Panc1 (cell line): ENCODE measurements at regions of chr1 and their contacts with region 1.

Region 1: GRCh38 chr1:169595764-169596711 is 9.8 kb upstream of the F5 start:
- DNase-seq: no peak
- ATAC-seq: no peak
- H3K4me3 ChIP-seq: no peak overlapping the region
- H3K27ac ChIP-seq: no peak overlapping the region
- H3K4me1 ChIP-seq: no peaks in the 10 kb centered on the region
- H3K27me3 ChIP-seq: peaks cover 2% of the 10 kb centered on the region; the same call in 1 of the 2 replicates
- CTCF ChIP-seq: no peak

Region 2: GRCh38 chr1:169288011-169288414 is 308.0 kb before region 1 on chr1:
- CTCF ChIA-PET with region 1: no interaction called
- POLR2A ChIA-PET with region 1: no interaction called
- in situ Hi-C with region 1: no loop called
- intact Hi-C with region 1: no loop called
- DNase-seq: no peak
- ATAC-seq: peak; percentile 60; the same call in 1 of the 2 replicates
- H3K4me3 ChIP-seq: no peak overlapping the region
- H3K27ac ChIP-seq: no peak overlapping the region
- H3K4me1 ChIP-seq: 0 out of 2 replicates have a peak, but pooled peaks cover 3% of the 10 kb centered on the region
- H3K27me3 ChIP-seq: no peaks in the 10 kb centered on the region
- CTCF ChIP-seq: no peak

Region 3: DNA sequence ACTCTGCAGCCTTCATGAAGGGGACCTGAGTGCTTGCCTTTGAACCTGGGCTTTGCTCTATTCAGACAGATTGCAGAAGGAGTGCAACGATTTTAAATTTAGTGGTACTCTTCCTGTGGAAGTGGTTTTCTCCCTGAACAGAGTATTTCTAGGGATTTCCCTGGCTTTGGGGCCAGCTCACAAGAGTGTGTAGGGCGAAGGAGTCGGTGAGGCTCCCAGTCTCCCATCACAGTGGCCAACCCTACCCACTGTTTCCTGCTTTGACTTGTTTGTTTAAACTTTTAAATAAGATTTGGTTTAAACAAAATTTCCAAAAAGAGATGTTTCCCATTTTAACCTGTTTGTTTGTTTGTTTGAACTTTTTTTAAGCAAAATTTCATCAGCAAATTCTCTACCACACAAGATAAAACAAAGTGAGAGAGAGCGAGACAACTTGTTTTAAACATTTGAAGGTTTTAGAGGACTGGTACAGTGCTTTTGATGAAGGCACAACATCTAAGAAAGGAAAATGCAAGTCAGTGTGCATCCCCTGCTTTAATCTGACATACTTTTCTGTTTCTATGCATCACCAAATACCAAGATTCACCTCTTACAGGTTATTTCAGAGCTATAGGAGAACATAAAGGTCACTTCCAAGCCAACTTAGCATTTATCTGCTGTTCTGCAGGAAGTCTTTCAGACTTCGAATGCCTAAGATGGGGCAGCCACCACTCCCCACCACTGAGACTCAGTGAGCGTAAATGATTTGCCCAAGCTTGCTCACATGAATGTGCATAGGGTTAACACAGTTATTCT is 27.3 kb after region 1 on chr1:
- CTCF ChIA-PET with region 1: no interaction called
- POLR2A ChIA-PET with region 1: no interaction called
- in situ Hi-C with region 1: no loop called
- intact Hi-C with region 1: loop called (anchors 1 kb)
- DNase-seq: no peak
- ATAC-seq: no peak
- H3K4me3 ChIP-seq: no peak overlapping the region
- H3K27ac ChIP-seq: no peak overlapping the region
- H3K4me1 ChIP-seq: no peaks in the 10 kb centered on the region
- H3K27me3 ChIP-seq: no peaks in the 10 kb centered on the region
- CTCF ChIP-seq: no peak